IMR-90 (cell line): ENCODE measurements at regions of chr1 and their contacts with region 1.

Region 1: GRCh38 chr1:92858564-92859399 is 26.9 kb downstream of the RPL5 start:
- DNase-seq: peak; percentile 85
- ATAC-seq: peak; percentile 94
- H3K4me3 ChIP-seq: no peak overlapping the region
- H3K27ac ChIP-seq: no peak overlapping the region
- H3K4me1 ChIP-seq: no peaks in the 10 kb centered on the region
- H3K27me3 ChIP-seq: no peaks in the 10 kb centered on the region
- CTCF ChIP-seq: peak; percentile 100
- POLR2A ChIP-seq: no peak
- RAD21 ChIP-seq: peak; percentile 97

Region 2: DNA sequence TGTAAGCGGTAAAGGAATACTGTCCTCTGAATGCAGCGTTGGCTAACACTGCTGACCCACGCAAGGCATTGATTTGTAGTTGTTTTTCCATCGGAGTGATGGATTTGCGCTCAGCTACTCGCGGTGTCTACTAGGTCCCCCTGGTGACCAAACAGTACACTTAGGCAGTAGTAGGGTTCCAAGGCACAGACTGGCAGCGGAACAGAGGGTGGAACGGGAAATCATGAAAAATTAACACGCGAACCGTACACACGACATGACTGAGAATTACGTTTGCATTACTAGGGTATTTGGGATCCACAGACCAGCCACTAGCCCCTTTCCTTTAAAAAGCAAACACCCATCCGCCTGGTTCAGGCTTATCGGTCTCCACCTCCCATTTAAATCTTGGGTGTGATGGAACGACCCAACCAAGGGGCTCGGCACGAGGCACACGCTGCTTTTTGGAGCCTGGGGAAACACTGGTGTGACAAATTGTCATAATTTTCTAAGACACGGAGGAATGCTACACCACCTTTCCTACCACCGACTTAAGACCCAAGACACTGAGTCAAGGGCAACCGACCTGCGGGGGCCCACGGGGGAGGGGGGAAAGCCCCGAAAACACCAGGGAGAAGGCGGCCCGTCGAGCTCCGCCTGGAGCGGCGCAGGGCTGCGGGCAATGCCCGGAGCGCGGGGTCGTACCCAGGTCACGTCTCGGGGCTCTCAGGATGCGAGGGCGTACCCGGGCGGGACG is 101.8 kb after region 1 on chr1:
- CTCF ChIA-PET with region 1: interaction called, 24 read pairs
- POLR2A ChIA-PET with region 1: no interaction called
- dilution Hi-C with region 1: no loop called
- in situ Hi-C with region 1: no loop called
- intact Hi-C with region 1: loop called (anchors 1 kb)
- DNase-seq: peak; percentile 82
- ATAC-seq: peak; percentile 53
- H3K4me3 ChIP-seq: peak overlapping the region; percentile 97
- H3K27ac ChIP-seq: peak overlapping the region; percentile 56
- H3K4me1 ChIP-seq: no peaks in the 10 kb centered on the region; the same call in 1 of the 2 replicates
- H3K27me3 ChIP-seq: no peaks in the 10 kb centered on the region; the same call in 1 of the 2 replicates
- CTCF ChIP-seq: peak; percentile 75
- POLR2A ChIP-seq: no peak
- RAD21 ChIP-seq: peak; percentile 76

Region 3: GRCh38 chr1:93061895-93062792 is 203.4 kb after region 1 on chr1:
- CTCF ChIA-PET with region 1: no interaction called
- POLR2A ChIA-PET with region 1: no interaction called
- dilution Hi-C with region 1: no loop called
- in situ Hi-C with region 1: no loop called
- intact Hi-C with region 1: loop called (anchors 1 kb)
- DNase-seq: peak; percentile 36
- ATAC-seq: peak; percentile 80
- H3K4me3 ChIP-seq: no peak overlapping the region
- H3K27ac ChIP-seq: no peak overlapping the region
- H3K4me1 ChIP-seq: no peaks in the 10 kb centered on the region
- H3K27me3 ChIP-seq: peaks cover 19% of the 10 kb centered on the region
- CTCF ChIP-seq: peak; percentile 48
- POLR2A ChIP-seq: no peak
- RAD21 ChIP-seq: peak; percentile 43